Right ventricle myocardium superior (tissue), 1 donor: ENCODE measurements at regions of chr17 and their contacts with region 1.

Region 1: DNA sequence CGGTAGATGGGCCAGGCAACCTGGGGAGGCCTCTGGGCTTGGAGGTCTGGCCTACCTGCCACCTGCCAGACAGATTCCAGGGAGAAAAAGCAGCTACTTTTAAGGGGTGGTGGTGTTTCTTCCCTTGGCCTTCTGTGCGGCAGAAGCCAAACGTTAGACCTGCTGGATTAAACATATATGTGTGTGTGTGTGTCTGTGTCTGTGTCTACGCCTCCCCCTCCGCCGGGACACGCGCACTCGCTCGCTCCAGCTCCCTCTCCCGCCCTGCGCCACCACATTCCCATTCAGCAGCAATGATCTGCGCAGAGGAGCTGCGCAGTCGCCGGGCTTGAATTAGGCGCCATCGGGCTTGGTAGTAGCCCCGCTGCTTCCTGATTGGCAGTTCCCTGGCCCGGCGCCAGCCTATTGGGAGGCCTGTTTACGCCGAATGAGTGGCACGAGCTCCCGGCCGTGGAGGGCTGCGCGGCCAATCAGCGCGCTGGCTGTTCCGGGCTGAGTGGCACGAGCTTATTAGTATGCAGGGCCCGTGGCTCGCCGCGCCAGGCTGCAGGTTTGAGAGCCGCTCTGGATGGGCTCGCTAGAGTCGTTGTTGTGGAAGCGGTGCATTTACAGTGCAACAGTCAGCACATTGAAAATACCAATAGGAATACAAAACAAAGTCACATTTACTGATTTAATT is at the start of gene BAHCC1:
- DNase-seq: peak; percentile 100
- ATAC-seq: peak; percentile 85
- total RNA-seq, gene BAHCC1: 8.0 TPM

Region 2: GRCh38 chr17:81294856-81295680 is 100.0 kb before region 1 on chr17 and contains the start of gene SLC38A10:
- intact Hi-C with region 1: loop called (anchors 5 kb)
- DNase-seq: peak; percentile 96
- ATAC-seq: peak; percentile 95
- total RNA-seq, gene SLC38A10: 41.3 TPM

Region 3: GRCh38 chr17:81621494-81622130 is 226.6 kb after region 1 on chr17:
- intact Hi-C with region 1: no loop called
- DNase-seq: no peak
- ATAC-seq: peak; percentile 74